ENCODE measurements at regions of chr14 and their contacts with region 1.

Region 1: GRCh38 chr14:74380841-74381240 is 32.6 kb downstream of the VRTN start:
- DNase-seq: no peak
- H3K4me3 ChIP-seq: no peak overlapping the region
- H3K27ac ChIP-seq: peak overlapping the region; percentile 16; the same call in 1 of the 2 replicates
- H3K4me1 ChIP-seq: peaks cover 24% of the 10 kb centered on the region
- H3K27me3 ChIP-seq: no peaks in the 10 kb centered on the region
- CTCF ChIP-seq: no peak

Region 2: DNA sequence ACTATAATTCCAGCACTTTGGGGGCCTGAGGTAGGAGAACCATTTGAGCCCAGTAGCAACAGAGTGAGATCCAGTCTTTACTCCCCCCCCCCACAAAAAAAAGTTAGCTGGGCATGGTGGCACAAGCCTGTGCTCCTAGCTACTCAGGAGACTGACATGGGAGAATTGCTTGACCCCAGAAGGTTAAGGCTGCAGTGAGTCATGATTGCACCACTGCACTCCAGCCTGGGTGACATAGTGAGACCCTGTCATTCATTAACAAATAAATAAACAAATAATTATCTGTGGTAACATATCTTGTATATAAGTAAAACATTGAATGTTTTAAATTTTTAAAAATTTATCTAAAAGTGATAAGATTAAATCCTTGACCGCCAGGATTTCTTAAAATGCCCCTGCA is 366.5 kb before region 1 on chr14:
- CTCF ChIA-PET with region 1: no interaction called
- POLR2A ChIA-PET with region 1: no interaction called
- intact Hi-C with region 1: no loop called
- DNase-seq: no peak
- H3K4me3 ChIP-seq: no peak overlapping the region
- H3K27ac ChIP-seq: no peak overlapping the region
- H3K4me1 ChIP-seq: peaks cover 8% of the 10 kb centered on the region; the same call in 1 of the 2 replicates
- H3K27me3 ChIP-seq: no peaks in the 10 kb centered on the region
- CTCF ChIP-seq: no peak

Region 3: DNA sequence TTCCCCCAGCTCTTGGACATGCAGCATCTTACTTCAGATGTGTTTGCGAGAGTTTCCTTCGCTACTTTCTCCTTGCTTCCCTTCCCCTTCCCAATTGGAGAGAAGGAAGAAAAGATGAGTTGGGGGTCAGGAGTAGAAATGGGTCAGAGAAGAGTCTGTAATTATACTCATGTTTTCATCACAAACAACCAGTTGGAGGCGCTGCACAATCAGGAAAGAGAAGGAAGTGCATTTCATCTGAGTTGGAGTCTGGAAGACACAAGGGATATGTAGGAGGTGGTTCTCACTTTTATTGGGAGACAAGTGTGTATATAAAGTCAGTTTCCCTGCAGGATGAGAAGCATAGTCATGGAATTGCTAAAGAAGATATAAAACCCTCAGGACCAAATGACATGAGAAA is 172.9 kb before region 1 on chr14:
- CTCF ChIA-PET with region 1: no interaction called
- POLR2A ChIA-PET with region 1: interaction called, 20 read pairs
- intact Hi-C with region 1: no loop called
- DNase-seq: no peak
- H3K4me3 ChIP-seq: no peak overlapping the region
- H3K27ac ChIP-seq: no peak overlapping the region
- H3K4me1 ChIP-seq: no peaks in the 10 kb centered on the region
- H3K27me3 ChIP-seq: no peaks in the 10 kb centered on the region
- CTCF ChIP-seq: no peak; the same call in 1 of the 2 replicates

Region 4: GRCh38 chr14:74349757-74350156 is 31.1 kb before region 1 on chr14:
- CTCF ChIA-PET with region 1: no interaction called
- POLR2A ChIA-PET with region 1: no interaction called
- intact Hi-C with region 1: no loop called
- DNase-seq: no peak
- H3K4me3 ChIP-seq: no peak overlapping the region
- H3K27ac ChIP-seq: no peak overlapping the region
- H3K4me1 ChIP-seq: peaks cover 11% of the 10 kb centered on the region
- H3K27me3 ChIP-seq: peaks cover 4% of the 10 kb centered on the region; the same call in 1 of the 2 replicates
- CTCF ChIP-seq: no peak

Region 5: GRCh38 chr14:74437496-74438053 is 56.7 kb after region 1 on chr14:
- CTCF ChIA-PET with region 1: no interaction called
- POLR2A ChIA-PET with region 1: no interaction called
- intact Hi-C with region 1: no loop called
- DNase-seq: peak in 1 of 2 experiments; percentile 32
- H3K4me3 ChIP-seq: no peak overlapping the region
- H3K27ac ChIP-seq: peak overlapping the region; percentile 72
- H3K4me1 ChIP-seq: peaks cover 27% of the 10 kb centered on the region
- H3K27me3 ChIP-seq: no peaks in the 10 kb centered on the region
- CTCF ChIP-seq: no peak

Region 6: DNA sequence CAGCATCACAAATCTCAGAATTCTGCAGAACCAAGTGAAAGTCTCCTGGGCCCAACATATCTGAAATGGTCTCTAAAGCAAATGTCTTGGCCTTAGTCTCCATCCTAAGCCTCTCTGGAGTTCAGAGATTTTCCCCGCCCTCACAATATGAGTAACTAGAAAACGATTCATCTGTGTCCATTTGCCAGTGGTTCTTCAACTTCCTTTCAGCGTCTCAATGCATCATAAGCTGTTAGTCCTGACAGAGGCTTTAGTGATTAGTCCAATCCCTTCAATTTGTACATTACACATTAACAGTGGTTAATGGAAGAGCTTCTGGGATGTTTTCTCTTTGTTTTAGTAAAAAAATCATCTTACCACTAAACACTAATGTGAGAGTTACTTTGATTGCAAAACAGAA is 94.8 kb after region 1 on chr14:
- CTCF ChIA-PET with region 1: no interaction called
- POLR2A ChIA-PET with region 1: no interaction called
- intact Hi-C with region 1: no loop called
- DNase-seq: no peak
- H3K4me3 ChIP-seq: no peak overlapping the region
- H3K27ac ChIP-seq: no peak overlapping the region
- H3K4me1 ChIP-seq: no peaks in the 10 kb centered on the region
- H3K27me3 ChIP-seq: no peaks in the 10 kb centered on the region
- CTCF ChIP-seq: no peak

Measured in PC-9 (cell line).